ENCODE measurements at regions of chr20 and their contacts with region 1.

Region 1: GRCh38 chr20:1466211-1467081 is at the start of gene NSFL1C:
- DNase-seq: peak; percentile 96 to 99 (median 97)
- ATAC-seq: peak; percentile 97
- H3K4me3 ChIP-seq: peak within 1 kb of the TSS; percentile 67 to 76
- H3K4me3 Mint-ChIP-seq: peak within 1 kb of the TSS; percentile 87
- H3K27ac ChIP-seq: peak within 1 kb of the TSS; percentile 67 to 73
- H3K27ac Mint-ChIP-seq: peak within 1 kb of the TSS; percentile 87
- H3K4me1 ChIP-seq: peaks cover 31% of the 10 kb centered on the region
- H3K4me1 Mint-ChIP-seq: peaks cover 52% of the 10 kb centered on the region
- H3K27me3 ChIP-seq: no peaks in the 10 kb centered on the region
- H3K27me3 Mint-ChIP-seq: peaks cover 2% of the 10 kb centered on the region
- CTCF ChIP-seq: peak; percentile 100
- total RNA-seq, gene NSFL1C: 66.0 to 70.5 TPM

Region 2: DNA sequence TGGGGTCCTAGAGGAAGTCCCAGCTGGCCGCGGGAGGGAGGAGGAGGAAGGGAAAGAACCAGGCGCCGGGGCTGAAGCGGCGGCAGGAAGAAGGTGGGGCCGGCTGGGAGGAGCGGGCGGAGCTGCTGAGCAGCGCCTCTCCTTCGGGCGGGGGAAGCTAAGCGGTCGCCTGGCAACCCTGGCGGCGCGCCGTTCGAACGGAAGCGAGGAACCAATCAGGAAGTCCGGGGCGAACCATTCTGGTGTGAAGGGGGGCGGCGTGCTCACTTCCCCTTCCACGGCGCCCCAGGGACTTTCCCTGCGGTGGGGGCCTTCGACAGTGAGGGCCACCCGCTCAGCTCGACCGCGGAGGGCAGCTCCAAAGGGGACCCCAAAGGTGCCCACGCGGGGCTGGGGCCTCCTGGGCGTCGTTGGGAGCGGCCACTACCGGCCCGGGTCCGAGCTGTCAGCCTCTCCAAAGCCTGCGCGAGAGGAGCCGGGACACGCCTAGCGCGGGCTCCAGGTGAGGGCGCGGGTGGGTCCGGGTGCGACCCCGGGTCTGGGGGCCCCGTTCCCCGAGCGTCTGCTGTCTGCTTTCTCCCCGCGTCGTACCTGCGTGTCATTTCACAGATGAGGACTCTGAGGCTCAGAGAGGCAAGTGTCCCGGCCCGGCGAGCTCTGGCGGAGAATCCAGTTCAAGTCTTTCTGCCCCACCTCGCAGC is 632.8 kb before region 1 on chr20 and contains the start of gene FAM110A:
- CTCF ChIA-PET with region 1: no interaction called
- POLR2A ChIA-PET with region 1: no interaction called
- intact Hi-C with region 1: loop called (anchors 5 to 10 kb)
- DNase-seq: peak; percentile 89 to 99 (median 96)
- ATAC-seq: peak; percentile 96
- H3K4me3 ChIP-seq: peak within 1 kb of the TSS; percentile 90 to 96
- H3K4me3 Mint-ChIP-seq: peak within 1 kb of the TSS; percentile 91
- H3K27ac ChIP-seq: peak within 1 kb of the TSS; percentile 85 to 96
- H3K27ac Mint-ChIP-seq: peak within 1 kb of the TSS; percentile 82
- H3K4me1 ChIP-seq: peaks cover 27% of the 10 kb centered on the region
- H3K4me1 Mint-ChIP-seq: peaks cover 43% of the 10 kb centered on the region
- H3K27me3 ChIP-seq: no peaks in the 10 kb centered on the region
- H3K27me3 Mint-ChIP-seq: no peaks in the 10 kb centered on the region
- CTCF ChIP-seq: no peak
- total RNA-seq, gene FAM110A: 6.7 to 7.7 TPM

Region 3: DNA sequence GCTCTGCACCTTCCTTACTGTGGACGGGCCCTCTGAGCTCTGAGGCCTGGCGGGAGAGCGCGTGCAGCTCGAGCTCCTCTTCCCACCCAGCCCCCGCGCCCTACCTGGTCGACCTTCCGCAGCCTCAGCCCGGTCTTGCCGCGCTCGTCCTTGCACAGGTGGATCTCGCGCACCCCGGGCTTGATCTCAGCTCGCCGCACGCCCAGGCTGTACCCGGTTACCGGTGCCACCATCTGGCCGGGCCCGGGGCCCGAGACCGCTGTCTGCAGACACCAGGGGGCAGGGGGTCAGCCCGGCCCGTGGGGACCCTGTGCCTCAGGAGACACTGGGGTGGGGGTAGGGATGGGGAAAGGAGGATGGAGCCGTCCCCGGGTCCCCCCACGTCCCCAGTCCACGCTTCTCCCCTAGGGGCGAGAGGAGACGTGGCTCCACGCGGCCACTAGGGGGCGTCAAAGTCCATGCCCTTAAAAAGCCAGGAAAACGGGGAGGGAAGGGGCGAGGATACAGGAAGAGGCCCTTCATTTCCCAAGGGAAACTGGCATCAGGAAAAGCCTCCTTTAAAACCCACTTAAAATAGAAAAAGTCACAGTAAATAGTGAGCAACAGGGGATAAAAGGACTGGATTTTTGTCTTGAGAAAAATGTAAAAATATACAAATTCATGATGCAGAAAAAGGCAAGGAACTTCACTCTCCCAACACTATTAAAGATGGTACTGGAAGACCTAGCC is 153.0 kb before region 1 on chr20:
- CTCF ChIA-PET with region 1: interaction called, 8 read pairs
- POLR2A ChIA-PET with region 1: no interaction called
- intact Hi-C with region 1: loop called in 1 of 2 experiments (anchors 1 kb)
- DNase-seq: peak; percentile 20 to 83 (median 69)
- ATAC-seq: peak; percentile 82
- H3K4me3 ChIP-seq: no peak overlapping the region
- H3K4me3 Mint-ChIP-seq: no peak overlapping the region
- H3K27ac ChIP-seq: no peak overlapping the region
- H3K27ac Mint-ChIP-seq: no peak overlapping the region
- H3K4me1 ChIP-seq: peaks cover 6% of the 10 kb centered on the region
- H3K4me1 Mint-ChIP-seq: peaks cover 8% of the 10 kb centered on the region
- H3K27me3 ChIP-seq: no peaks in the 10 kb centered on the region
- H3K27me3 Mint-ChIP-seq: no peaks in the 10 kb centered on the region
- CTCF ChIP-seq: peak; percentile 99

Region 4: DNA sequence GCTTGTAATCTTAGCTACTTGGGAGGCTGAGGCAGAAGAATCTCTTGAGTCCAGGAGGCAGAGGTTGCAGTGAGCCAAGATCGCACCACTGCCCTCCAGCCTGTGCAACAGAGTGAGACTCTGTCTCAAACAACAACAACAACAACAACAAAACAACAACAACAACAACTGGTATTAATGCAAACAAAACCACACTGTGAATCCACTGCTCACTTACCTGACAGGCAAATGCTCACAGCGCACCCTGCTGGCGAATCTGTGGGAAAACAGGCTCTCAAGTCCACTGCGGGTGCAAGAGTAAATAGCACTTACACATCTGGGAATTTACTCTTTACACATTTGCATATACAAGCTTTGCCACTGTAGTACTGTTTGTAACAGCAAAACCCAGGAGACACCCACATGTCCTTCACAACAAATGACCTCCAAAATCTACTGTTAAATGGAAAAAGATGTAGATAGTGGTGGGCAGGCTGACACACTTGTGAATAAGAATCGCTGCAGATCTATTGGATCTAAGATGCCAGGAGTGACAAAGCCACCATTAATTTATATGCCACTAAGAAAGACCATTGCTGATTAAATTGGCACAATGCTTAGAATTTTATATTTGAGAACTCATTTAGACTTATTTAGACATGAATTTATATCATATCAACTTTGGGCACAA is 29.1 kb before region 1 on chr20:
- CTCF ChIA-PET with region 1: interaction called, 3 read pairs
- POLR2A ChIA-PET with region 1: interaction called, 3 read pairs
- intact Hi-C with region 1: loop called in 1 of 2 experiments (anchors 2 kb)
- DNase-seq: peak; percentile 57 to 87 (median 82)
- ATAC-seq: peak; percentile 65
- H3K4me3 ChIP-seq: no peak overlapping the region
- H3K4me3 Mint-ChIP-seq: no peak overlapping the region
- H3K27ac ChIP-seq: no peak overlapping the region
- H3K27ac Mint-ChIP-seq: no peak overlapping the region
- H3K4me1 ChIP-seq: peaks cover 27% of the 10 kb centered on the region
- H3K4me1 Mint-ChIP-seq: peaks cover 41% of the 10 kb centered on the region
- H3K27me3 ChIP-seq: peaks cover 0 to 5% of the 10 kb centered on the region in 2 experiments
- H3K27me3 Mint-ChIP-seq: no peaks in the 10 kb centered on the region
- CTCF ChIP-seq: peak; percentile 82

Region 5: GRCh38 chr20:1484438-1485116 is 18.1 kb after region 1 on chr20:
- CTCF ChIA-PET with region 1: no interaction called
- POLR2A ChIA-PET with region 1: no interaction called
- intact Hi-C with region 1: no loop called
- DNase-seq: no peak
- ATAC-seq: no peak
- H3K4me3 ChIP-seq: no peak overlapping the region
- H3K4me3 Mint-ChIP-seq: no peak overlapping the region
- H3K27ac ChIP-seq: no peak overlapping the region
- H3K27ac Mint-ChIP-seq: no peak overlapping the region
- H3K4me1 ChIP-seq: no peaks in the 10 kb centered on the region
- H3K4me1 Mint-ChIP-seq: no peaks in the 10 kb centered on the region
- H3K27me3 ChIP-seq: peaks cover 1 to 3% of the 10 kb centered on the region in 2 experiments
- H3K27me3 Mint-ChIP-seq: peaks cover 33% of the 10 kb centered on the region
- CTCF ChIP-seq: no peak

Region 6: DNA sequence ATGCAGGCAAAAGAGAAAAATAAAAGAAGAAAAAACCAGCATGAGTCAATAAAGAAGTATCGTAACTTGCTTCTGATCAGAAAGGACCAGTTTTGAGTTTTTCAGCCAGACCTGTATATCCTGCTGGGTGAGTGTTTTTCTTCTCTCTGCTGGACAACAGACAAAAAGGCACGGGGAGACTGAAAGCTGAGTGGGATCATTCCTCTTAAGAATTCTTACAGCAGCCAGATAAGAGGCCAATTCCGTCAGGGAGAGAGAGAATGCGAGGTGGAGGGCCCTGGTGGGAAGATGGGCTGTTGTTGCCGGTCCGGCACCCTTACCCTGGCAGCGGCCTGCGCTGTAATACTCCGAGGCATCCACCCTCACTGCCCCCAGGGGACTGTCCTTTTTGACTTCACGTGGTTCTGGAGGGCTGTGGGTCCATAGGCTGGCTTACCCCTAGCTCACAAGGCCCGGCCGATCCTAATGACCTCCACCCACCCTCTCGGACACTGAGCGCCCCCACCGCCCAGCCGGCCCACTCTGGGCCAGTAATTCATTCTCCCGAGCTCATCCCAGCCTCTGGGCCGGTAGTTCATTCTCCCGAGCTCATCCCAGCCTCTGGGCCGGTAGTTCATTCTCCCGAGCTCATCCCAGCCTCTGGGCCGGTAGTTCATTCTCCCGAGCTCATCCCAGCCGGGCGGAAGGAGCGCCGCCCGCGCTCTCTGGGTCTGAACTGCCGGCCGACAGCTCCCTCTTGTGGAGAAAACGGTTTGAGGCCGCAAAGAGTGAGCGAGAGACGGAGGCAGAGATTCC is 310.4 kb after region 1 on chr20:
- CTCF ChIA-PET with region 1: interaction called, 12 read pairs
- POLR2A ChIA-PET with region 1: interaction called, 5 read pairs
- intact Hi-C with region 1: no loop called
- DNase-seq: peak; percentile 69 to 91 (median 84)
- ATAC-seq: peak; percentile 94
- H3K4me3 ChIP-seq: peak overlapping the region; percentile 61 to 68
- H3K4me3 Mint-ChIP-seq: peak overlapping the region; percentile 84
- H3K27ac ChIP-seq: peak overlapping the region in 1 of 2 experiments; percentile 18
- H3K27ac Mint-ChIP-seq: peak overlapping the region; percentile 56
- H3K4me1 ChIP-seq: peaks cover 7% of the 10 kb centered on the region
- H3K4me1 Mint-ChIP-seq: peaks cover 16% of the 10 kb centered on the region
- H3K27me3 ChIP-seq: no peaks in the 10 kb centered on the region
- H3K27me3 Mint-ChIP-seq: peaks cover 13% of the 10 kb centered on the region
- CTCF ChIP-seq: peak; percentile 78

Region 7: GRCh38 chr20:2651772-2652723 is 1185.6 kb after region 1 on chr20 and contains the start of gene NOP56:
- CTCF ChIA-PET with region 1: no interaction called
- POLR2A ChIA-PET with region 1: no interaction called
- intact Hi-C with region 1: loop called in 1 of 2 experiments (anchors 5 kb)
- DNase-seq: peak; percentile 91 to 98 (median 95)
- ATAC-seq: peak; percentile 92
- H3K4me3 ChIP-seq: peak within 1 kb of the TSS; percentile 52 to 85
- H3K4me3 Mint-ChIP-seq: peak within 1 kb of the TSS; percentile 88
- H3K27ac ChIP-seq: peak within 1 kb of the TSS; percentile 77 to 86
- H3K27ac Mint-ChIP-seq: peak within 1 kb of the TSS; percentile 87
- H3K4me1 ChIP-seq: peaks cover 20% of the 10 kb centered on the region
- H3K4me1 Mint-ChIP-seq: peaks cover 44% of the 10 kb centered on the region
- H3K27me3 ChIP-seq: no peaks in the 10 kb centered on the region
- H3K27me3 Mint-ChIP-seq: no peaks in the 10 kb centered on the region
- CTCF ChIP-seq: no peak
- total RNA-seq, gene NOP56: 311 to 317 TPM